MCF 10A (cell line): ENCODE measurements at regions of chr4 and their contacts with region 1.

Region 1: GRCh38 chr4:173257732-173258717 is 76.1 kb downstream of the HMGB2 start:
- DNase-seq: peak; percentile 70
- H3K4me3 Mint-ChIP-seq: no peak overlapping the region
- H3K27ac Mint-ChIP-seq: no peak overlapping the region
- H3K4me1 Mint-ChIP-seq: peaks cover 5% of the 10 kb centered on the region
- H3K27me3 Mint-ChIP-seq: no peaks in the 10 kb centered on the region
- CTCF ChIP-seq: peak; percentile 77

Region 2: GRCh38 chr4:172892300-172892699 is 365.7 kb before region 1 on chr4:
- CTCF ChIA-PET with region 1: interaction called, 4 read pairs
- POLR2A ChIA-PET with region 1: no interaction called
- intact Hi-C with region 1: loop called (anchors 5 kb)
- DNase-seq: peak; percentile 51
- H3K4me3 Mint-ChIP-seq: no peak overlapping the region
- H3K27ac Mint-ChIP-seq: no peak overlapping the region
- H3K4me1 Mint-ChIP-seq: no peaks in the 10 kb centered on the region
- H3K27me3 Mint-ChIP-seq: peaks cover 21% of the 10 kb centered on the region
- CTCF ChIP-seq: peak; percentile 67

Region 3: DNA sequence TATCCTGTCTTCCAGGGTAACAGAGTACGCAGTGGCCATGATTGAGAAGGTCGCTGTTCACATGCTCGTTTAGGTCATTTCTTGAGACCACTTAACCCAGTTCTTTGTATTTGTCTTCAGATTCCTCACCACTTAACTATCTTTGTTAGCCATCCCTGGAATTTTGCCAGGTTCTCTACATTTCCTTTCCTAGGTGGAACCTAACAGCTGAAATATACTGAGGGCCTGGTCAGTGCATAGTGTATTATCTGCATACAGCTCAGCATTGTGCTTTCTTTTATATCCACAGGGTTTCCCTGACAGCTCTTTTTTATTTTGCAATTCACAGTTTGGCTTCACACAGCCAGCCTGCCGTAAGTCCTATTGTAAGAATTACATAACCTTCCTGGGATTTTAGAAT is 238.3 kb before region 1 on chr4:
- CTCF ChIA-PET with region 1: interaction called, 127 read pairs
- POLR2A ChIA-PET with region 1: interaction called, 6 read pairs
- intact Hi-C with region 1: no loop called
- DNase-seq: no peak
- H3K4me3 Mint-ChIP-seq: no peak overlapping the region
- H3K27ac Mint-ChIP-seq: no peak overlapping the region
- H3K4me1 Mint-ChIP-seq: no peaks in the 10 kb centered on the region
- H3K27me3 Mint-ChIP-seq: no peaks in the 10 kb centered on the region
- CTCF ChIP-seq: no peak

Region 4: GRCh38 chr4:173025131-173025530 is 232.9 kb before region 1 on chr4:
- CTCF ChIA-PET with region 1: interaction called, 52 read pairs
- POLR2A ChIA-PET with region 1: interaction called, 6 read pairs
- intact Hi-C with region 1: loop called (anchors 1 kb)
- DNase-seq: peak; percentile 81
- H3K4me3 Mint-ChIP-seq: no peak overlapping the region
- H3K27ac Mint-ChIP-seq: no peak overlapping the region
- H3K4me1 Mint-ChIP-seq: no peaks in the 10 kb centered on the region
- H3K27me3 Mint-ChIP-seq: no peaks in the 10 kb centered on the region
- CTCF ChIP-seq: peak; percentile 74

Region 5: GRCh38 chr4:173181769-173182354 is 76.2 kb before region 1 on chr4:
- CTCF ChIA-PET with region 1: interaction called, 10 read pairs
- POLR2A ChIA-PET with region 1: interaction called, 3 read pairs
- intact Hi-C with region 1: loop called (anchors 2 kb)
- DNase-seq: peak; percentile 47
- H3K4me3 Mint-ChIP-seq: no peak overlapping the region
- H3K27ac Mint-ChIP-seq: peak overlapping the region; percentile 31
- H3K4me1 Mint-ChIP-seq: peaks cover 22% of the 10 kb centered on the region
- H3K27me3 Mint-ChIP-seq: no peaks in the 10 kb centered on the region
- CTCF ChIP-seq: no peak

Region 6: GRCh38 chr4:173231916-173232315 is 26.1 kb before region 1 on chr4:
- CTCF ChIA-PET with region 1: interaction called, 11 read pairs
- POLR2A ChIA-PET with region 1: no interaction called
- intact Hi-C with region 1: loop called (anchors 1 kb)
- DNase-seq: peak; percentile 49
- H3K4me3 Mint-ChIP-seq: no peak overlapping the region
- H3K27ac Mint-ChIP-seq: peak overlapping the region; percentile 36
- H3K4me1 Mint-ChIP-seq: peaks cover 2% of the 10 kb centered on the region
- H3K27me3 Mint-ChIP-seq: no peaks in the 10 kb centered on the region
- CTCF ChIP-seq: peak; percentile 44

Region 7: DNA sequence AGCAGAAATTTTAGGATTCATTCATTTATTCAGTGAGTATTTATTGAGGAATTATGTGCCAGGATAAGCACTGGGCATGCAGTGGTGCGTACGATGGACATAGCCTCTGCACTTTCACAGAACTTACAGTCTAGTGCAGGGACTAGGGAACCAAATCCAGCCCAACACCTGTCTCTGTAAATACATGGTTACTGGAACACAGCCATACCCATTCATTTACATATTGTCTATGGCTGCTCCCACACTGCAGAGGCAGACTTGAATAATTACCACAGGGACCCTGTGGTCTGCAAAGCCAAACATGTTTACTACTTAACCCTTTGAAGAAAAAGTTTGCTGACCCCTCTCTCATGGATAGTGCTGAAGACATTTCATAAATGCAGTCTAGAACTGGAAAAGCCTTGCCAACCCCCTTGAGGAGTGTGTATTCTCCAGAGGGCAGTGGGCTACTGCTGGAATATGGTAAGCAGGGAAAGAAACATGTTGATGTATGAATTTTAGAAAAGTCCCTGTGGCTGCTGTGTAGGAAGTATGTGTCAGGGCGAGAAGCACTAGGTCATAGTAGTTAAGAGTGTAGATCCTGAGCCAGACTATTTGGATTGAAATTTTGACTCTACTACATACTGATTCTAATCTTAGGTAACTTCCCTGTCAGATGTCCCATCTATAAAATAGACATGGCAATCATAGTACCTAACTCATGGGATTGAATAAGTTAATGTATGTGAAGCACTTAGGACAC is 13.9 kb before region 1 on chr4:
- CTCF ChIA-PET with region 1: interaction called, 10 read pairs
- POLR2A ChIA-PET with region 1: interaction called, 25 read pairs
- intact Hi-C with region 1: no loop called
- DNase-seq: no peak
- H3K4me3 Mint-ChIP-seq: no peak overlapping the region
- H3K27ac Mint-ChIP-seq: no peak overlapping the region
- H3K4me1 Mint-ChIP-seq: peaks cover 18% of the 10 kb centered on the region
- H3K27me3 Mint-ChIP-seq: no peaks in the 10 kb centered on the region
- CTCF ChIP-seq: no peak

Region 8: GRCh38 chr4:173642509-173642908 is 384.5 kb after region 1 on chr4:
- CTCF ChIA-PET with region 1: no interaction called
- POLR2A ChIA-PET with region 1: no interaction called
- intact Hi-C with region 1: no loop called
- DNase-seq: no peak
- H3K4me3 Mint-ChIP-seq: no peak overlapping the region
- H3K27ac Mint-ChIP-seq: no peak overlapping the region
- H3K4me1 Mint-ChIP-seq: no peaks in the 10 kb centered on the region
- H3K27me3 Mint-ChIP-seq: peaks cover 30% of the 10 kb centered on the region
- CTCF ChIP-seq: no peak

Region 9: DNA sequence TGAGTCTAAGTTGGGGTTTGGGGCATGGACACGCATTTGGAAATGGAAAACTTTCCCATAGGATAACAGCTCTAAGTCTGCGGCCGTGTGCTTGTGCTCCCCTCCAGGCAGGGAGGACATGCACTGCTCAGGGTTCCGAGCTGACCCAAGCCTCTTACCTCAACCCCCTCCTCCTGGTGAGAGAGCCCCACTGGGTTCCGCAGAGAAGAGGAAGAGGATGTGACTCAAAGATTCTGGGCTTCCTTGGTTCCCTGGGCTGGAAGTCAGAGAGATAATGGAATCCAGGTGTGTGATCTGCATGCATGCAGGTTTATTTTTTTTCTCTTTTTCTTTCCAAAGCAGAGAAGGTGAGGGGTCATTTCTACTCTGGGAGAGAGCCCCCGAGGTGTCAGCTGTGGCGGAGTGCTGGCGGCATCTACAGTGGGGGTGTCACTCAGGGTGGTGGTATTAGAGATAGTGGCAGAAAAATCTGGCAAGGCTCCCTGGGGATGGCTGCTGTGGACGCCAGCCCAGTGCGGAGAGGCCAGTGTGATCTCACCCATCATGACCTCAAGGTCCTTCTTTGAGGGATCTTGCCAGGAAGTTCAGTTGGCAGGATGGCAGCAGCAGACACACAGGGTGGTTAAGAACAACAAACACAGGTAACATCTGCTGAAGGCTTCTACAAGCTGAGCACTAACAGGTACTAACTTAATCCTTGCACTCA is 440.7 kb after region 1 on chr4:
- CTCF ChIA-PET with region 1: no interaction called
- POLR2A ChIA-PET with region 1: no interaction called
- intact Hi-C with region 1: no loop called
- DNase-seq: no peak
- H3K4me3 Mint-ChIP-seq: no peak overlapping the region
- H3K27ac Mint-ChIP-seq: no peak overlapping the region
- H3K4me1 Mint-ChIP-seq: no peaks in the 10 kb centered on the region
- H3K27me3 Mint-ChIP-seq: peaks cover 12% of the 10 kb centered on the region
- CTCF ChIP-seq: no peak